GM13976 (cell line): ENCODE measurements at regions of chr5 and their contacts with region 1.

Region 1: GRCh38 chr5:71757590-71758543 is 38.8 kb downstream of the CARTPT start:
- DNase-seq: peak; percentile 45
- CTCF ChIP-seq: peak; percentile 66

Region 2: DNA sequence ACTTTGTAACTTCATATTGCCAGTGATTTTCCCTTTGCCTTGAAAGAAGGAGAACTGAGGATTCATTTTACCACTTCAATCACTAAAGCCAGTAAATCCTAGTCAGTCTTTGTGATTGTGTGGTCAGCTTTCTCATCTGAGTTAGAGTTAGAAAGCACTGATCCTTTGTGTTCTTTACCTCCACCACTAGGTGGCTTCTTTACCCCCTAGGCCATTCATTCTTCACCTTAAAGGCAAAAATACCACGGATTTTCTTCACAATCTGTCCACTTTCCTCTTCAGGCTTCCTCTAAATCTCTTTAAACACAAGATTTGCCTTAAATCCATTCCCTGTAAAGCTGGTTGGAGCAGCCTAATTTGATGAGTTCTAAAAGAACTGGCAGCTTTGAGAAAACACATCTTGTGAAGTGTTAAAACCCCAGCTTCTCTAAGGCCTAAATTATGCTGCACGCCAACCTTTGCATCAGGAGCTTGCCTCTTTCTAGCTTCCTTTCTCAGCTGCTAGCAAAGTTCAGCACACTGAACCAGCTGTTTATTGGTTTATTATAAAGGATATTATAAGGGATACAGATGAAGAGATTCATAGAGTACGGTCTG is 282.0 kb before region 1 on chr5:
- in situ Hi-C with region 1: loop called (anchors 25 kb)
- DNase-seq: peak; percentile 68
- CTCF ChIP-seq: peak; percentile 40

Region 3: GRCh38 chr5:72661405-72661804 is 903.5 kb after region 1 on chr5:
- in situ Hi-C with region 1: no loop called
- DNase-seq: no peak
- CTCF ChIP-seq: no peak